GM10248 (cell line): ENCODE measurements at regions of chr7 and their contacts with region 1.

Region 1: GRCh38 chr7:111098011-111098925 is 7.3 kb downstream of the LRRN3 start:
- DNase-seq: no peak
- CTCF ChIP-seq: peak; percentile 59

Region 2: DNA sequence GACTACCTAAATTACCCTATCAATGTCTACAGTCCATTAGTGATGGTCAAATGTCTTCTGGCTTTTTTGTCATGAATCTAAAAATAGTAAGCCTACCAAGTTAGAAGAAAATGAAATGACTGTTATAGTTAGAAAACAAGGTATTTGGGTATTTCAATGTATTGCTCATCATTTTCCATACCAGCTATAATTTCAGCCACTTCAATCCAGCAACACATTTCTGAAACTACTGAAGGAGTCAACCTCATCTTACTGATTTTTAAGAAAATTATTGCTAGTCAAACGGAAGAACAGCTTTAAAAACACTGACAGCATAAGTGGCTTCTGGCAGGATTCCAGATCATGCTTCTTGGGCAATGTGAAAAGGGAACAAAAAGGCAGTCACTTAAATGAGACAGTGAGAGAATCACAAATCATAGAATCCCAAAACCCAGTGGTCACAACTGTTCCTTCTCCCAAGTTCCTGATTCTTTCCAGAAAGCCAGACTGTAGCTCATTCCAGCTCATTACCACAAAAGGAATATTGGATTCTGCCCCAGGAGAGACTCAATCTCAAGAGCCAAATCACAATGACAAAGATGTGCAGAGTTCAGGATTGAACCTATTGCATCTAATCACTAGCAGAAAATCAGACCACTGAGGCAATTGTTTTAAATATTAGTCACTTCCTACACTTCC is 68.6 kb before region 1 on chr7:
- CTCF ChIA-PET with region 1: no interaction called
- POLR2A ChIA-PET with region 1: no interaction called
- DNase-seq: no peak
- CTCF ChIP-seq: no peak

Region 3: DNA sequence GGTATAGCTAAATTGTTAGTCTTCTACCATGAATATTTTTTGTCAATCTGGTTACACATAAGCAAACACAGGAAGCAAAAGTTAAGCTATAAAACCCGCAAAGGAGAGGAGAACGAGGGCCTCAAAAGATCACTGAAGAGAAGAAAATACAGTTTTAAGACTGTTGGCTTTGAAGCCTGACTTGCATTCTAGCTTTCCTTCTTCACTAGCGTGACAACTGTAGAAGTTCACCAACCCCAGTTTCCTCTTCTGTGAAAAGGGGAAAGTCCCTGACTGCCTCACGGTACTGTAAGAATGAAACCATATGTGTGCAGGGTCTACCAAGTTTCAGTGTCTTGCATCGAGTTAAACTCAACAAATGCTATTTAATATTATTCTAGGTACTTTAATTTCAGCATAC is 14.9 kb before region 1 on chr7:
- CTCF ChIA-PET with region 1: interaction called, 19 read pairs
- POLR2A ChIA-PET with region 1: no interaction called
- DNase-seq: peak; percentile 67
- CTCF ChIP-seq: no peak